Heart right ventricle (tissue), 16 donors: ENCODE measurements at regions of chr14 and their contacts with region 1.

Region 1: GRCh38 chr14:68780358-68781160 is 12.3 kb downstream of the ZFP36L1 start:
- DNase-seq: peak; percentile 70 to 74
- ATAC-seq: peak; percentile 66 to 91 (median 85)
- H3K4me3 ChIP-seq: peak overlapping the region in 2 of 10 donors; percentile 7 to 22
- H3K27ac ChIP-seq: peak overlapping the region in 9 of 10 donors; percentile 9 to 88 (median 62)
- H3K4me1 ChIP-seq: peaks cover 9 to 60% (median 46%) of the 10 kb centered on the region in 9 donors
- H3K27me3 ChIP-seq: no peaks in the 10 kb centered on the region
- CTCF ChIP-seq: no peak

Region 2: GRCh38 chr14:68685419-68686204 is 94.9 kb before region 1 on chr14:
- intact Hi-C with region 1: loop called in 2 of 10 experiments (anchors 5 to 10 kb)
- DNase-seq: no peak
- ATAC-seq: no peak
- H3K4me3 ChIP-seq: no peak overlapping the region
- H3K27ac ChIP-seq: peak overlapping the region in 5 of 10 donors; percentile 25 to 96 (median 85)
- H3K4me1 ChIP-seq: peaks cover 23 to 69% (median 47%) of the 10 kb centered on the region in 9 donors
- H3K27me3 ChIP-seq: no peaks in the 10 kb centered on the region
- CTCF ChIP-seq: no peak

Region 3: DNA sequence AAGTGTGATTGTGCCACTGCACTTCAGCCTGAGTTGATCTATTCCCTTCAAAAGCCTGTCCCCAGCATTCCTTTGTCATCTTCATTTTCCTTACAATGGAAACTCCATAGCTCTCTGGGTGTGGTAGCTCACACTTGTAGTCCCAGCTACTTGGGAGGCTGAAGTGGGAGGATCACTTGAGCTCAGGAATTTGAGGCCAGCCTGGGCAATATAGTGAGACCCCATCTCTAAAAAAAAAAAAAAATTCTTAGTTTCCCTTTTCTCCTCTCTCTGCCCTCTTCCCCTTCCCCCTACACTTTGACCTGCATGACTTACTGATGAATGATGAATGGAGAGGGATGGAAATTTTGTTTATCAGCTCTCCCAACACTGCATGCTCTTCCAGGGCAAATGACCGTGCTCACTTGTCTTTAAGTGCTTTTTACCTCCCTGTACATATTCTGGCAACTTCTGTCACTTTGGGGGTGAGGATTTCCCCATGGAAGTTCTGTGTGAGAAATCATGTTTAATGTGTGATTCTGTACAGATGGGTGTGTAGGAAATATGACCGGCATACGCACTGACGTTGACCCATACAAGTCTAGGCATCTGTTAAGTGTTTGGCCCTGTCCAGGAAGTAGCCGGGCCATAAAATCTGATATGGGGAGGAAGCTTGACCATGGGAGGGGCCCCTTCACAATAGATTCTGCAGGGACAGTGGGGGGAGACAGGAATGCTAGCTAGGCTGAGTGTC is 53.1 kb before region 1 on chr14:
- intact Hi-C with region 1: loop called in 4 of 10 experiments (anchors 2 to 5 kb)
- DNase-seq: peak in 1 of 2 donors; percentile 52
- ATAC-seq: peak; percentile 49 to 82 (median 76)
- H3K4me3 ChIP-seq: no peak overlapping the region
- H3K27ac ChIP-seq: peak overlapping the region in 7 of 10 donors; percentile 7 to 77 (median 23)
- H3K4me1 ChIP-seq: peaks cover 16 to 69% (median 50%) of the 10 kb centered on the region in 9 donors
- H3K27me3 ChIP-seq: no peaks in the 10 kb centered on the region
- CTCF ChIP-seq: no peak

Region 4: DNA sequence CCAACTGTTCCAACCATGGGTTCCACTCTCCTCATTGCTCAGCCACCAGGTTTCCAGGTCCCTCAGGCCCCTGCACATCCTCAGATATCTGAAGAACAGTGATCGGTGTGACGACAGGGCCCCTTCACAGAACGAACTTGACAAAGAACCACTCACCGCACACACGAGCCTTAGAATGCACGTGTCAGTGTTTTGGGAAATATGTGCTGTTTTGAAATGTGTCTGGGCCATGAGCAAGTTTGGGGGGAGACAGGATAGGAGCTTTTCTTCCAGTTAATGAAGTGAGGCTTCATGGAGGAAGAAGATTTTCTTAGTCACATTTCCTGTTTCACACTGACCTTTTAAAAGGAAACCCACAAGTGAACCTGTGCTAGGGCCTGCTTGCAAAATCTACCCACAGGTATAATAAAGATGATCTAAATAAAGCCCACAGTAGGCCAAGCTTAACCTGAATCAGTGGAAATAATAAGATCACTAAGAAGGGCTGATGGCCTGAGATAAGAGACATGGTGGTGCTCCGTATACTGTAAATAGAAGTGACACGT is 46.3 kb before region 1 on chr14:
- intact Hi-C with region 1: loop called in 4 of 10 experiments (anchors 2 to 5 kb)
- DNase-seq: no peak
- ATAC-seq: peak in 2 of 8 donors; percentile 3
- H3K4me3 ChIP-seq: no peak overlapping the region
- H3K27ac ChIP-seq: peak overlapping the region in 4 of 10 donors; percentile 5 to 91 (median 60)
- H3K4me1 ChIP-seq: peaks cover 12 to 77% (median 66%) of the 10 kb centered on the region in 9 donors
- H3K27me3 ChIP-seq: peaks cover 0 to 7% (median 0%) of the 10 kb centered on the region in 7 donors
- CTCF ChIP-seq: no peak